T-cell (primary cell): ENCODE measurements at regions of chr5 and their contacts with region 1.

Region 1: GRCh38 chr5:172280937-172281336 is 2.6 kb downstream of the UBTD2 start:
- DNase-seq: no peak
- ATAC-seq: no peak
- H3K4me3 ChIP-seq: no peak overlapping the region
- H3K4me3 Mint-ChIP-seq: no peak overlapping the region
- H3K27ac ChIP-seq: no peak overlapping the region
- H3K27ac Mint-ChIP-seq: no peak overlapping the region
- H3K4me1 ChIP-seq: peaks cover 13 to 18% of the 10 kb centered on the region in 2 experiments
- H3K4me1 Mint-ChIP-seq: peaks cover 33 to 42% (median 36%) of the 10 kb centered on the region in 3 donors
- H3K27me3 ChIP-seq: no peaks in the 10 kb centered on the region
- H3K27me3 Mint-ChIP-seq: no peaks in the 10 kb centered on the region

Region 2: GRCh38 chr5:171386006-171386671 is 894.8 kb before region 1 on chr5:
- CTCF ChIA-PET with region 1: no interaction called
- POLR2A ChIA-PET with region 1: interaction called, 5 to 16 read pairs
- DNase-seq: no peak
- ATAC-seq: no peak
- H3K4me3 ChIP-seq: no peak overlapping the region
- H3K4me3 Mint-ChIP-seq: peak overlapping the region; percentile 53 to 99 (median 97)
- H3K27ac ChIP-seq: no peak overlapping the region
- H3K27ac Mint-ChIP-seq: no peak overlapping the region
- H3K4me1 ChIP-seq: peaks cover 29 to 30% of the 10 kb centered on the region in 2 experiments
- H3K4me1 Mint-ChIP-seq: peaks cover 33 to 41% (median 41%) of the 10 kb centered on the region in 3 donors
- H3K27me3 ChIP-seq: peaks cover 0 to 4% of the 10 kb centered on the region in 2 experiments
- H3K27me3 Mint-ChIP-seq: no peaks in the 10 kb centered on the region